PC-3 (cell line): ENCODE measurements at regions of chr3 and their contacts with region 1.

Region 1: GRCh38 chr3:82581350-82581749 is 819.9 kb upstream of the GBE1 start:
- DNase-seq: no peak
- ATAC-seq: no peak; the same call in 1 of the 2 replicates
- H3K4me3 ChIP-seq: no peak overlapping the region
- H3K27ac ChIP-seq: no peak overlapping the region
- H3K4me1 ChIP-seq: no peaks in the 10 kb centered on the region
- H3K27me3 ChIP-seq: no peaks in the 10 kb centered on the region
- CTCF ChIP-seq: no peak

Region 2: DNA sequence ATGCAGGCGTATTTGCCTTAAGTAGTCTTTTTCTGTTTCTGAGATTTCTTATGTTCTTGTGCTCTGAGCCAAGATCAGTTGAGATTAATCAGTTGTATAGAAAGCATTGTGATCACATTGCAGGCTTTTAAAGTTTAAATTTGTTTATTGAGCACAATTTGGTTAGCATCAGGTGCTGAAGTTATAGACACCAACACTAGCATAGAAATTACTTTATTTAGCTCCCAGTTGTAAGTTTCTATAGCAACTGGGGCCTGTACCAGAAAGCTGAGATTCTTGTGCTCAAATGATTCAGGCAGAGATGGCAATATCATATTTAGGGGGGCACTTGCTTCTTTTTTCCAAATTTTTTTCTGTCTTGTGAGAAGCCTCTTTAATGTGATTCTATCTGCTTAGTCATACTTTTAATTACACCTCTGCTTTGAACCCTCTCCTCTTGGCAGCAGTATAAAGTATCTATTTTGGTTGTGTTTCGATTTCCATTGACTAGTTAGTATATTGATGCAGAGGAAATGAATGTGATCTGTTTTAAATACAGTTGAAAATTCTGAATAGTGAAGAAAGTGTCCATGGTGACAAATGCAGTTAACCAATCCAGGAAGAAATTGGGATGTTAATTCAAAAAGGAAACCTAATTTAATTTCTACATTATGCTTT is 578.2 kb before region 1 on chr3:
- CTCF ChIA-PET with region 1: no interaction called
- POLR2A ChIA-PET with region 1: interaction called, 11 read pairs
- intact Hi-C with region 1: no loop called
- DNase-seq: no peak
- ATAC-seq: no peak
- H3K4me3 ChIP-seq: no peak overlapping the region
- H3K27ac ChIP-seq: no peak overlapping the region
- H3K4me1 ChIP-seq: 0 out of 2 replicates have a peak, but pooled peaks cover 4% of the 10 kb centered on the region
- H3K27me3 ChIP-seq: no peaks in the 10 kb centered on the region
- CTCF ChIP-seq: no peak

Region 3: DNA sequence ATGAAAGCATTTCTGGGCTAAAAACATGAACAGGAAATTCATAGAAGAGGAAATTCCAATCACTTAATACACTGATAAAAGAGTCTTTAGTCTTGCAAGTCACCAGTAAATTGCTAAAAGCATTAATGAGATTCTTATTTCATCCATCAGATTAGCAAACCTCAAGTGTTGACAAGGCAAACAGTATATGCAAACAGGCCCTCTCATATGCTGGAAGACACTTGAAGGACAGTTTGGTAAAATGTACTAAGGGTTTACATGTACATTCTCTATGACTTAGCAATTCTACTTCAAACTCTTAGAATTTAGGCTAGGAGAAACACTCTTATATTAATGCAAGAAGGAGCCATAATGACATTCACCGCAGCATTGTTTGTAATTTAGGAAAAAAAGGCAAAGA is 233.8 kb before region 1 on chr3:
- CTCF ChIA-PET with region 1: no interaction called
- POLR2A ChIA-PET with region 1: no interaction called
- intact Hi-C with region 1: no loop called
- DNase-seq: no peak
- ATAC-seq: no peak
- H3K4me3 ChIP-seq: no peak overlapping the region
- H3K27ac ChIP-seq: no peak overlapping the region
- H3K4me1 ChIP-seq: no peaks in the 10 kb centered on the region
- H3K27me3 ChIP-seq: no peaks in the 10 kb centered on the region
- CTCF ChIP-seq: no peak